ENCODE measurements at regions of chr10 and their contacts with region 1.

Region 1: DNA sequence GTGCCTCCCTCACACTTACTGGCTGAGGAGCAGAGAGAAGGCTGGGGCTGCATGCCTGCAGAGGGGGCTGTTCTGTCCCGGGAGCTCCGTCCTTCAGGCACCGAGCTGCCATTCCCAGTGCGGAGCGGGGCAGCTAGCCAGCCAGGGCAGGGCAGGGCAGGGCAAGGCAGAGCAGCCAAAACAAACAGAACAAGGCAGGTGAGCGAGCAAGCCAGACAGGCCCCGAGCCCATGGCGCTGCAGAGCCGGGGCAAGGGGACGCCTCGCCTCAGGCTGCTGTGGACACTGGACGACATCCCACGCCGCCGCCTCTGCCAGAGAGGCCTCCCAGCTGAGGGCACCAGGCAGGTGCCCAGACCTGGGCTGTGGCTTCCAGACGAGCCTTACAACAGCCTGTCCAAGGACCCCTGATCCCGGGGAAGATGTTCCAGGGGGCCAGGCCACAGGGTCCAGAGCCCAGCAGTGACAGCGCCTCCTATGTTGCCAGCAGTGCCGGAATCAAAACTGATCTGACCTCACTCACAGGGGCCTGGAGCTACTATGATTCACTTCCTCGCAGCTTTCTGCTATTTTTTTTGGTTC is 8.2 kb upstream of the NDST2 start:
- DNase-seq: peak; percentile 62
- H3K4me3 ChIP-seq: no peak overlapping the region
- H3K27ac ChIP-seq: peak overlapping the region; percentile 56
- H3K4me1 ChIP-seq: peaks cover 39% of the 10 kb centered on the region
- H3K27me3 ChIP-seq: no peaks in the 10 kb centered on the region
- CTCF ChIP-seq: peak; percentile 42 to 54
- POLR2A ChIP-seq: no peak

Region 2: GRCh38 chr10:73759512-73760115 is 60.0 kb before region 1 on chr10:
- CTCF ChIA-PET with region 1: no interaction called
- POLR2A ChIA-PET with region 1: no interaction called
- dilution Hi-C with region 1: no loop called
- intact Hi-C with region 1: no loop called
- DNase-seq: no peak
- H3K4me3 ChIP-seq: no peak overlapping the region
- H3K27ac ChIP-seq: no peak overlapping the region
- H3K4me1 ChIP-seq: no peaks in the 10 kb centered on the region
- H3K27me3 ChIP-seq: no peaks in the 10 kb centered on the region
- CTCF ChIP-seq: no peak
- POLR2A ChIP-seq: no peak

Region 3: DNA sequence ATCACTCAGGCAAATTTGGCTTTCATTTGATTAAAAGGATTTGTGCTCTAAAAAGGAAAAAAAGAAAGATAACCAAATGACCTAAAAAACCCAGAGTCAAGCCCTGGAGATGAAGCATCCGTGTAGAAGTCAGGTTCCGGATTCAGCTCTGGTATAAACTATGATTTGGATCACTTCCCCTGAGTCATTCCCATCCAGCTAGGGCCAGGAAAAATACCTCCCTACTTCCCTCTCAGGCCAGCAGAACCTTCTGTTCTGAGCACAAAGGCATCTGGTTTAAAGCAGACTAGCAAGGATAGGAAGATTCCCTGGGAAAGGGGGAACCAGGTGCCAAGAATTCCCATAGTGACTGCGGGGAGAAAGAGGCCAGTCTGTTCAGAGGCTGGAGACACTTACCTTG is 17.5 kb after region 1 on chr10:
- CTCF ChIA-PET with region 1: interaction called, 54 read pairs
- POLR2A ChIA-PET with region 1: interaction called, 6 read pairs
- dilution Hi-C with region 1: no loop called
- intact Hi-C with region 1: loop called (anchors 1 kb)
- DNase-seq: peak; percentile 83
- H3K4me3 ChIP-seq: no peak overlapping the region
- H3K27ac ChIP-seq: peak overlapping the region; percentile 34
- H3K4me1 ChIP-seq: peaks cover 30% of the 10 kb centered on the region
- H3K27me3 ChIP-seq: no peaks in the 10 kb centered on the region
- CTCF ChIP-seq: no peak
- POLR2A ChIP-seq: no peak

Region 4: DNA sequence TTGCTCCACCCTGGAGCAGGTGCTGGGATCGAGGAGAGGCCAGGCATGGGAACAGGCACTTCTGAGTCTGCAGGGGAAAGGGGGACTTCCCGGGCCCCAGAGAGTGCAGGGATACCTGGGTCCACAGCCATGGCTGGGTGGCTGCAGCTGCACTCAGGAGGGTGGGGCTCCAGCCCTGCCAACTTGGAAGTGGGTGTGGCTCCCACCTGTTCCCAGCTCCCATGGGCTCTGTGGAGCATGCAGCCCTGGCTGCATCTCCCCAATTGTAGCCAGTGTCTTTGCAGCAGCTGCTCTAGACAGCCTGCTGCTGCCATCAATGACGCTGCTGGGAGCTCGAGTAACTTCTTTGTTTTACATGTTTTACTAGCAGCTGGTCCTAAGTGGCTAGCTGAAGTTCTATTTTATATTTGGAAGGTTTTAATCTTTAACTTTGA is 388.5 kb after region 1 on chr10:
- CTCF ChIA-PET with region 1: no interaction called
- POLR2A ChIA-PET with region 1: no interaction called
- dilution Hi-C with region 1: no loop called
- intact Hi-C with region 1: no loop called
- DNase-seq: no peak
- H3K4me3 ChIP-seq: no peak overlapping the region
- H3K27ac ChIP-seq: no peak overlapping the region
- H3K4me1 ChIP-seq: no peaks in the 10 kb centered on the region
- H3K27me3 ChIP-seq: no peaks in the 10 kb centered on the region
- CTCF ChIP-seq: no peak
- POLR2A ChIP-seq: no peak

Region 5: DNA sequence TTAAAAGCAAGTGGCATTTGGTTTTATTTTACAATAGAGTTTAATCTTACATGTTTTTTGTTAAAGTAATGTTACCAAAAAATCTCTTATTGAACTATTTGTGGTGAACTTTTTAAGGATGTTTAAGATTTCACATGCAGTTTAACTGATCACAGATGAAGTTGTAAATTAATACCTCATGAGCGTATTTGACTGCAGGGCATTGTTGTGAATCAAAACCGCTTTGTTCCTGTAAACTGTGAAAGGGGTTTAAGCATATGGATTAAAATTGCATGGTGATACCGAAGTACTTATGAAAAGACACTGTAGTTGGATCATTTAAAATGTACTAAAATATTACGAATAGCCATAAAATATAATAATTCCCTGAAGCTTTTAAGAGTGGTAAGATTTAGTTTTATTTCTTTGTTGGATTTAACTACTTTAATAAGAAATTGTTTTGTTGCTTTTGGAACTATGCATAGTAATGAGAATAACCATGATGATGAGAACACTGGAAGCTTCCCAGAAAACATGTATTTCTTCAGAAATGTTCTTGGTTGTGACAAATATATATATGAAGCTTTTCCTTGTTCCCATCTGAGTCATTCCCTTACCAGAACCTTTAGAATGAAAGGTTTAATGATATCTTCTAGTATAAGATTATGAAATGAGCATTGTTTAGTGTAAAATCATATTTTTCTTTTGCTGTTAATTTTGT is 462.7 kb after region 1 on chr10:
- CTCF ChIA-PET with region 1: no interaction called
- POLR2A ChIA-PET with region 1: no interaction called
- dilution Hi-C with region 1: no loop called
- intact Hi-C with region 1: no loop called
- DNase-seq: no peak
- H3K4me3 ChIP-seq: no peak overlapping the region
- H3K27ac ChIP-seq: no peak overlapping the region
- H3K4me1 ChIP-seq: no peaks in the 10 kb centered on the region
- H3K27me3 ChIP-seq: no peaks in the 10 kb centered on the region
- CTCF ChIP-seq: no peak
- POLR2A ChIP-seq: no peak

Region 6: GRCh38 chr10:74474022-74474713 is 654.6 kb after region 1 on chr10:
- CTCF ChIA-PET with region 1: no interaction called
- POLR2A ChIA-PET with region 1: no interaction called
- dilution Hi-C with region 1: no loop called
- intact Hi-C with region 1: no loop called
- DNase-seq: no peak
- H3K4me3 ChIP-seq: no peak overlapping the region
- H3K27ac ChIP-seq: no peak overlapping the region
- H3K4me1 ChIP-seq: no peaks in the 10 kb centered on the region
- H3K27me3 ChIP-seq: no peaks in the 10 kb centered on the region
- CTCF ChIP-seq: no peak
- POLR2A ChIP-seq: no peak

Measured in endothelial cell of umbilical vein (primary cell).